Activated naive CD4-positive, alpha-beta T cell treated with anti-CD3 and anti-CD28 coated beads for 36 hours (primary cell): ENCODE measurements at regions of chr16 and their contacts with region 1.

Region 1: DNA sequence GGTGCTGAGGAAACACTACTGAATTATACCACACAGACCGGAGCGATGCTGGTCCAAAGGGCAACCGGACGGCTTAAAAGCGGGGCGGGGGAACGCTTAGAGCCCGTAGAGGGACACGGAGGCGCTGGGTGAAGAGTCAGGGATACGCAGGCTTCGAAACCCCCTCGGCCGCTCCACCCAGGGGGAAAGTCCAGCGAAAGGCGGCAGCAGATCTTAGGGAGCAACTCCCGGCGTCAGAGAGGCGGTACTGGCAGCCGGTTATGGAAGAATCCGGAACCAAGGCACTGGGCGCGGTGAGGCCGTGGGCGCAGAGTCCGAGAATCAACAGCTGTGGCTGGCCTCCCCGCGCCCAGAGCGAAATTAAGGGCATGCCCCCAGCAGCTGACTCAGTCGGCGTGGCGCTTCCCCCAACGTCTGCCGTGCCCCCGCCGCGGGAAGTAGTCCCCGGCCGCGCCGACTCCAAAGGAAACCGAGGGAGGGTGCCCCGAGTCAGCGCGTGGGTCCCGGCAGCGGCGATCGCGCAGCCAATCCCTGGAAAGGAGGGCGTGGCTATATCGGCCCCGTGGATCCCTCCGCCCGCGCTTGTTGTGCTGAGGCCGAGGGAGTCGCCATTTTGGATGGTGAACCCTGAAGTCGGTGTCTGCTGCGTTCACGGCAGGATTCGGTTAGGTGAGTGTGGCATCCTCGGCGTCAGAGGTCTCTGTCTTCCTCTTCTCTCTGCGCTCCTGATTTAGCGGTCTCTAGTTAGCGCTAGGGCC is at the start of gene IST1:
- DNase-seq: peak; percentile 99
- H3K4me3 Mint-ChIP-seq: peak within 1 kb of the TSS; percentile 97
- H3K27ac Mint-ChIP-seq: peak within 1 kb of the TSS; percentile 96
- H3K4me1 Mint-ChIP-seq: peaks cover 33% of the 10 kb centered on the region
- H3K27me3 Mint-ChIP-seq: no peaks in the 10 kb centered on the region
- total RNA-seq, gene IST1: 196 to 203 TPM

Region 2: GRCh38 chr16:71723537-71724319 is 171.4 kb before region 1 on chr16:
- CTCF ChIA-PET with region 1: no interaction called
- intact Hi-C with region 1: loop called (anchors 1 kb)
- DNase-seq: peak; percentile 74
- H3K4me3 Mint-ChIP-seq: peak overlapping the region; percentile 80
- H3K27ac Mint-ChIP-seq: no peak overlapping the region
- H3K4me1 Mint-ChIP-seq: peaks cover 18% of the 10 kb centered on the region
- H3K27me3 Mint-ChIP-seq: peaks cover 6% of the 10 kb centered on the region

Region 3: DNA sequence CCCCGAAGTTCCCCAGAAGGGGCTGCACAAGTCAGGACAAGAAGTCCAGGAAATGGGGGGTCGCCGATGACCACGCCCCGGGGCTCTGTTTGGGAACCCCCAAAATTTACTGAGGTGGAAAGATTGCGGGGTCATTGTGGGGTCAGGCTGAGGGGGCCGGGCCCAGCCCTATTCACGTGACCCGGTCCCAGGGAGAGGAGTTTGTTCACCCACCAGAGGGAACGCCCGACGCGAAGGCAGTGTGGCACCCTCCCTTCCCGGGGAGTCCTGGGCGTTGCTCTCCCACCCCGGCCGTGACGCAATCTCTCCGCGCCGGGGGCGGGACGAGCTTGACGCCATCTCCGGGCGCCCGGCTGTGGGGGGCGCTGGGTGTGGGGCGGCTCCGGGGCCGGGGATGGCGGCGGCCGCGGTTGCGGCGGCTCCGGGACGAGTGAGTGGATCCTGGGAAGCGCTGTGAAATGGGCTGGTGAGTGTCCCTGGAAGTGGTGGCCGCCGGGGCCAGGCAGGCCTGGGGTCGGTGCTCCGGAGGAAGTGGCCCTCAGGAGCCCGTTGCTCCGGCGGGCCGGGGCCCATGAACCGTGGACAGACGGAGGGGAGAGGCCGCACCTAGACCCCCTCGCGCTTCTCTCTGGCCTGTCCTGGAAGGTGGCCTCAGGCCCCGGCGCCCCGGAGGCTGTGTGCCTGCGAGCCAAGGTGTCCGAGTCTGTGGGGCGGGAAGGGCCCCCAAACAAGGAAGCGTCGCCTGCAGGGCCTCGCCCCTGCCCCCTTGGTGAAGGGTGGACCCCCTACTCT is 49.3 kb before region 1 on chr16 and contains the start of gene ATXN1L:
- CTCF ChIA-PET with region 1: no interaction called
- intact Hi-C with region 1: loop called (anchors 1 kb)
- DNase-seq: peak; percentile 90
- H3K4me3 Mint-ChIP-seq: peak within 1 kb of the TSS; percentile 88
- H3K27ac Mint-ChIP-seq: peak within 1 kb of the TSS; percentile 93
- H3K4me1 Mint-ChIP-seq: peaks cover 44% of the 10 kb centered on the region
- H3K27me3 Mint-ChIP-seq: no peaks in the 10 kb centered on the region
- total RNA-seq, gene ATXN1L: 11.3 to 11.9 TPM

Region 4: DNA sequence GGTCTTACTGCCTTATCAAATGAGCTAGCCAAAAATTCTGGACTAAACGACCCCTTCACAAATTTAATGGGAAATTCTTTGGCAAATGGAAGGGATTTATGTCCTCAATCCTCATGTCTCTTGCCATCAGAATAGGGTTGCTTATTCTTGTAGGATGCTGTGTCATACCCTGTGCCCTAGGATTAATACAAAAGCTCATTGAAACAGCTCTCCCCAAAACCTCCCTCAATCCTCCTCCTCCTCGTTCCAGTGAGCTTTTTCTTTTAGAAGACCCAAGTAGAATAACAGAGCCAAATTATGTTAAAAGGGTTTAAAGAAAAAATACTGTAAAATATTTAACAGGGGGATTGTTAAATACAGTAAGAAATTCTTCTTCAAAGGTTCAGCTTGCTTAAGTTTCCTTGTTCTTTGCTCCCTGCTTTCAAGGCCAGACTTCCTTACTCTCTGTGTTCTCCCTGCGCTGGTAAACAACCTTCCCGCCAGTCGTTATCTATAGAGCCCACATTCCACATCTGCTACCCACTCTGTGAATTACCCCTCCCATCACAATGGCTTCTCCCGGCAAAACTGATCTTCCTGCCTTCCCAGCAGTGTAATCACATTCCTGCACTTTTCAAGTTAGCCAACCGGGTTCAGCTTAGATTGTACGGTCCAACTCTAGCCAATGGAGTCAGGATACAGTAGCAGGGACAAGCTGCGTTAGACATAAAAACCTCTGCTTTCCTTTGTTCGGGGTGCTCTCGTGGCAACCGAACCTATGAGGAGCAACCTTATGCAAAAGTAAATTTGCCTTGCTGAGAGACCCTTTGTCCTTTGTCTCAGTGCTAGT is 177.6 kb after region 1 on chr16:
- CTCF ChIA-PET with region 1: no interaction called
- intact Hi-C with region 1: no loop called
- DNase-seq: no peak
- H3K4me3 Mint-ChIP-seq: no peak overlapping the region
- H3K27ac Mint-ChIP-seq: no peak overlapping the region
- H3K4me1 Mint-ChIP-seq: no peaks in the 10 kb centered on the region
- H3K27me3 Mint-ChIP-seq: no peaks in the 10 kb centered on the region

Region 5: DNA sequence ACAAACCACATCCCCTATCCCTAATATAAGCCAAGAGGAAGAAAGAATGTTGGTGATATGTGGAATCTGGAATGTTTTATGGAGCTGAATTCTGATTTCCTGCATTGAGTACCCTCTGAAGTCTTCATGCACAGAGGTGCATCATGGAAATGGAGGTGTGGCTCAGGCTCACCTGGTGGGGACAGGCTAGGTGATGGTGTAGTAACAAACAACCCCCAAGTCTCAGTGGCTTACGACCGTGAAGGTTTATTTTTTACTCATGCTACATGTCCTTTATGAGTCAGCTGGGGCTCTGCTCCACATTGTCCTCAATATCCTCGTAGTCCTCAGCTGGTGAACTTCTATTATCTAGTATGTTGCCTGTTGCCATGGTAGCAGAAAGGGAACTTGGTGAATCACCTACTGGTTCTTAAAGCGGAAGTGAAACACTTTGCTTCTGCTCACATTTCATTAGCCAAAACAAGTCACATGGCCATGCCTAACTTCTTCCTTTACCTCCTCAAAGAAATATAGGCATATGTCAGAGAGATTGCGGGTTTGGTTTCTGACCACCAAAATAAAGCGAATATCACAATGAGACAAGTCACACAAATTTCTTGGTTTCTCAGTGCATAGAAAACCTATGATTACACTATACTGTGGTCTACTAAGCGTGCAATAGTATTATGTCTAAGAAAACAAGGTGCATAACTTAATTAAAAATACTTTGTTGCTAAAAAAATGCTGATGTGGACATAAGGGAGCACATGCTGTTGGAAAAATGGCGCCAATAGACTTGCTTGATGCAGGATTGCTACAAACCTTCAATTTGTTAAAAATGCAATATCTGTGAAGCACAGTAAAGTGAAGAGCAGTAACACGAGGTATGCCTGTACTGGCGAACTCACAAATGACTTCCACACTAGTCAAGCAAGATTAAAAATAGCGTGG is 277.3 kb after region 1 on chr16 and contains the start of gene PMFBP1:
- CTCF ChIA-PET with region 1: no interaction called
- intact Hi-C with region 1: no loop called
- DNase-seq: peak; percentile 41
- H3K4me3 Mint-ChIP-seq: no peak within 1 kb of the TSS
- H3K27ac Mint-ChIP-seq: no peak within 1 kb of the TSS
- H3K4me1 Mint-ChIP-seq: no peaks in the 10 kb centered on the region
- H3K27me3 Mint-ChIP-seq: no peaks in the 10 kb centered on the region
- total RNA-seq, gene PMFBP1: 0.17 to 0.24 TPM

Region 6: DNA sequence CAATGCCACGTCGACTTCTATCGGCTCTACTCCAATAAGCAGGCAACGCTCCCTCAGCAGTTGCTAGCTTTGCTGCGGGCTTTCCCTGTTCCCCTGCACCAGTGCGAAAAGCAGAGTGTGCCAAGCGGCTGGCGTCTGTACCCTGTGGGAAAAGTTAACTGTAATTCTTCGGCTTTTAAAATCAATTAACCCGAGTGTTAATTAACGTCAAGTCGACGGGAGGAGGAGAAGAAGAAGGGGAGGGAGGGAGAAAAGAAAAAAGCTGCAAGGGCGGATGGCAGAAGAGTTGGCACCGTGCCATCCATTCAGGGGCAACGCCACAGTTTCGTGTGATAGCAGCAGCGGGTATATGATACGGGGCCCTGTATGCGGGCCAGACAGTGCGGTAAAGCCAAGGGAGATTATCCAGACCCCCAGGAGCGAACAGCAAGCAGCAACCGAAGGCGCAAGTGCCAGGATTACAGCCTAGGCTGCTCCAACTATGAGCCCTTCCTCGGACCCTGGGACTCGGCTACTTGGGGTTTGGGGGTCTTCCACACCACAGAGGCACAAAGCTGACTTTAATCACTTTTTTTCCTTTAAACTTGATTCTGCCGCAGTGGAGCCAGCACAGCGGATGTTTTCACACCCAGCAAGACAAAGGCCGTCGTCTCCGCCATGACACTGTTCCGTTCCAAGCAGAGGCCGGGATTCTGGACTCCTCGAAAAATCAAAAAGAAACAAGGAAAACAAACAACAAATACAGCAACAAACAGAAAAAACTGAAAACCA is 530.7 kb after region 1 on chr16:
- CTCF ChIA-PET with region 1: no interaction called
- intact Hi-C with region 1: no loop called
- DNase-seq: no peak
- H3K4me3 Mint-ChIP-seq: no peak overlapping the region
- H3K27ac Mint-ChIP-seq: no peak overlapping the region
- H3K4me1 Mint-ChIP-seq: no peaks in the 10 kb centered on the region
- H3K27me3 Mint-ChIP-seq: no peaks in the 10 kb centered on the region

Region 7: GRCh38 chr16:72501739-72502593 is 606.9 kb after region 1 on chr16:
- CTCF ChIA-PET with region 1: no interaction called
- intact Hi-C with region 1: no loop called
- DNase-seq: peak; percentile 69
- H3K4me3 Mint-ChIP-seq: no peak overlapping the region
- H3K27ac Mint-ChIP-seq: no peak overlapping the region
- H3K4me1 Mint-ChIP-seq: peaks cover 3% of the 10 kb centered on the region
- H3K27me3 Mint-ChIP-seq: no peaks in the 10 kb centered on the region